HepG2 (cell line): ENCODE measurements at regions of chr10 and their contacts with region 1.

Region 1: GRCh38 chr10:110497438-110498086 is at the start of gene DUSP5:
- DNase-seq: peak; percentile 75
- ATAC-seq: peak; percentile 81
- H3K4me3 ChIP-seq: peak within 1 kb of the TSS; percentile 57 to 77 (median 58)
- H3K27ac ChIP-seq: no peak within 1 kb of the TSS
- H3K4me1 ChIP-seq: peaks cover 24% of the 10 kb centered on the region
- H3K27me3 ChIP-seq: peaks cover 2 to 56% of the 10 kb centered on the region in 2 experiments; a peak in 4 of 5 replicates
- CTCF ChIP-seq: no peak
- EP300 ChIP-seq: no peak
- POLR2A ChIP-seq: no peak
- RAD21 ChIP-seq: no peak
- total RNA-seq, gene DUSP5: 1.4 and 1.5 TPM in 2 replicates

Region 2: GRCh38 chr10:110398419-110399162 is 99.0 kb before region 1 on chr10:
- CTCF ChIA-PET with region 1: no interaction called
- POLR2A ChIA-PET with region 1: no interaction called
- in situ Hi-C with region 1: no loop called
- intact Hi-C with region 1: loop called (anchors 1 kb)
- DNase-seq: peak; percentile 68
- ATAC-seq: peak; percentile 39
- H3K4me3 ChIP-seq: no peak overlapping the region
- H3K27ac ChIP-seq: no peak overlapping the region
- H3K4me1 ChIP-seq: peaks cover 44% of the 10 kb centered on the region
- H3K27me3 ChIP-seq: 0 out of 5 replicates have a peak, but pooled peaks cover 0 to 2% of the 10 kb centered on the region in 2 experiments
- CTCF ChIP-seq: no peak
- EP300 ChIP-seq: no peak; a peak in 1 of 4 replicates
- POLR2A ChIP-seq: no peak
- RAD21 ChIP-seq: no peak

Region 3: DNA sequence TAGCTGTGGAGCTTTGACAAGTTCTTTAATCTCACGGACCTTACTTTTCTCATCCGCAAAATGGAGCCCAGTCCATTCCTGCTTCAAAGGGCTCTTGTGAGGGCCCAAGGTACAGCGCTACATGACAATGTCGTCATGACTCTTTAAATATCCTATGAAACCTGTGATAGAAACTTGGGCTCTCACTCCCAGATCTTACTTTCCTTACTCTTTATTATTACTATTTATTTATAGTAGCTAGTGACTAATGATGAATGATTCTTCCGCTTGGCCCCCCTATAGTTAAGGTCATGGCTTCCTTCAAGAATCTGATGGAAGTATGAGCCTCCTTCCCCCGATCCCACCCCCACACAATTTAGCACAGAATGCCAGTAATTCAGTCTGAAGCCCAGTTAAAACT is 188.5 kb after region 1 on chr10:
- CTCF ChIA-PET with region 1: no interaction called
- POLR2A ChIA-PET with region 1: no interaction called
- in situ Hi-C with region 1: no loop called
- intact Hi-C with region 1: no loop called
- DNase-seq: no peak
- ATAC-seq: no peak
- H3K4me3 ChIP-seq: no peak overlapping the region
- H3K27ac ChIP-seq: no peak overlapping the region
- H3K4me1 ChIP-seq: no peaks in the 10 kb centered on the region
- H3K27me3 ChIP-seq: peaks cover 0 to 12% of the 10 kb centered on the region in 2 experiments; a peak in 2 of 5 replicates
- CTCF ChIP-seq: no peak
- EP300 ChIP-seq: no peak
- POLR2A ChIP-seq: no peak
- RAD21 ChIP-seq: no peak